Caco-2 (cell line): ENCODE measurements at regions of chr4 and their contacts with region 1.

Region 1: DNA sequence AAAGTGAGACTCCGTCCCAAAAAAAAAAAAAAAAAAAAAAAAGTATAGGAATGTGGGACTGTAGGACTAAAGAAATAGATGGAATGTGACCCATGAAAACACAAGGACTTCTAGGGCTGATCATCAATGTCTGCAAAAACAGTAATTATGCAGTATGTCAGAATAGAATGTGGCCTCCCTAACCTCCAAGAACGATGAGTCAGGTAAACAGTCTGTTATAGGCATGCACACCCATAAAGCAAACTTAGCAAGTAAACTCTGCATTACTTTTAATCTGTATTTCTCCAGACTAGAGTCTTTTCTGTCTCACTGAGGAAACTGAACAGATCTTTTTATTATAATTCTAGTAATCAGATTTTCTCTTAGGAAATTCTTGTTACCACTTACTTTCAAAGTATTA is 233.4 kb downstream of the HNRNPD start:
- DNase-seq: no peak
- H3K4me3 ChIP-seq: no peak overlapping the region
- H3K4me3 Mint-ChIP-seq: no peak overlapping the region
- H3K27ac Mint-ChIP-seq: no peak overlapping the region
- H3K4me1 ChIP-seq: no peaks in the 10 kb centered on the region
- H3K4me1 Mint-ChIP-seq: no peaks in the 10 kb centered on the region
- H3K27me3 ChIP-seq: no peaks in the 10 kb centered on the region
- H3K27me3 Mint-ChIP-seq: no peaks in the 10 kb centered on the region
- CTCF ChIP-seq: no peak

Region 2: GRCh38 chr4:81392164-81392563 is 748.3 kb before region 1 on chr4:
- CTCF ChIA-PET with region 1: interaction called, 12 read pairs
- POLR2A ChIA-PET with region 1: no interaction called
- intact Hi-C with region 1: no loop called
- DNase-seq: no peak
- H3K4me3 ChIP-seq: no peak overlapping the region
- H3K4me3 Mint-ChIP-seq: no peak overlapping the region
- H3K27ac Mint-ChIP-seq: no peak overlapping the region
- H3K4me1 ChIP-seq: no peaks in the 10 kb centered on the region
- H3K4me1 Mint-ChIP-seq: no peaks in the 10 kb centered on the region
- H3K27me3 ChIP-seq: no peaks in the 10 kb centered on the region
- H3K27me3 Mint-ChIP-seq: no peaks in the 10 kb centered on the region
- CTCF ChIP-seq: no peak